Right ventricle myocardium inferior (tissue), 1 donor: ENCODE measurements at regions of chr5 and their contacts with region 1.

Region 1: DNA sequence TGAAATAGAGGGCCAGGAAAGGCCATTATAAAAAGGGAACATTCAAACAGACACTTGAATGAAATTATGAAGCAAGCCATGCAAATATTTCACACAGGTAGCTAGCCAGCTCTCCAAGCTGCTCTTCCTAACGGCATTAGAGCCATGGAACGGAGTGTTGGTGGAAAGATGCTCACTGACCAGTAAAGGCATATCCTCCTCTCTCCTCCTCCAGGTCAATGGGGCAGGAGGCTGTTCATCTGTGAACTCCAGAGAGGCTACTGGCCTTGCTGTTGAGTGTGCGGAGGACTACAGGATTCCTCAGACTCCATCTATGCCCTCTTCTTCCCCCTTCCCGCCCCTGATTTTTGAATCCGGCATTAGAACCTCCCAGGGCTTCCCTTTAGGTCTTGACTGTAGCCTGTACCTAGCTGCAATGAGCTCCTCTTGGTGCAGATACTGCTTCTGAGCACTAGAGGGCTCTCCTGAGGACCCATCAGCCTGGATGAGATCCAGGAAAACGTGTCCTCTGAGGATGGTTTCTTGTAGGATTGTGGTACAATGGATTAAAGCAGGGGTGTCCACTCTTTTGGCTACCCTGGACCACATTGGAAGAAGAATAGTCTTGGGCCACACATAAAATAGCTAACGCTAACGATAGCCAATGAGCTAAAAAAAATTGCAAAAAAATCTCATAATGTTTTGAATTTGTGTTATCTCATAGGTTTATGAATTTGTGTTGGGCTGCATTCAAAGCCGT is 162.2 kb downstream of the SREK1 start:
- DNase-seq: no peak
- ATAC-seq: peak; percentile 84

Region 2: DNA sequence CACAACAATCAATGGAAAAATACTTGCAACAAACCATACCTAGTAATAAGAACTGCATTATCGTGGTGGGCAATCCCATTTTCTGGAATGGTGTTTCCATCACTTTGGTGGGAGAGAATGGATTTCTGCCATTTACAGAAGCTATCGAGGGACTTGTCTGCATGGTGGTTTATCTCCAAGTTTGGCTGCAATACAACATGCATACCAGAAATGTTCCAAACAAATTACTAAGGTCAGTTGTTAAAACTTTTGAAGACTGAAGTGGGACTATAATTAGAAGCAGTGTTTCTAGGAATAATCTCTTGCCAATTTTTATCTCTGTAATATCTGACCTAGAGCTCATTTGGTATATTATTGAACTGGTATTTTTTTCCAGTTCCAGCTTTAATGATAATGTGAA is 854.8 kb before region 1 on chr5:
- intact Hi-C with region 1: no loop called
- DNase-seq: no peak
- ATAC-seq: no peak

Region 3: GRCh38 chr5:66498791-66499207 is 192.5 kb after region 1 on chr5:
- intact Hi-C with region 1: loop called (anchors 2 kb)
- DNase-seq: no peak
- ATAC-seq: peak; percentile 88

Region 4: DNA sequence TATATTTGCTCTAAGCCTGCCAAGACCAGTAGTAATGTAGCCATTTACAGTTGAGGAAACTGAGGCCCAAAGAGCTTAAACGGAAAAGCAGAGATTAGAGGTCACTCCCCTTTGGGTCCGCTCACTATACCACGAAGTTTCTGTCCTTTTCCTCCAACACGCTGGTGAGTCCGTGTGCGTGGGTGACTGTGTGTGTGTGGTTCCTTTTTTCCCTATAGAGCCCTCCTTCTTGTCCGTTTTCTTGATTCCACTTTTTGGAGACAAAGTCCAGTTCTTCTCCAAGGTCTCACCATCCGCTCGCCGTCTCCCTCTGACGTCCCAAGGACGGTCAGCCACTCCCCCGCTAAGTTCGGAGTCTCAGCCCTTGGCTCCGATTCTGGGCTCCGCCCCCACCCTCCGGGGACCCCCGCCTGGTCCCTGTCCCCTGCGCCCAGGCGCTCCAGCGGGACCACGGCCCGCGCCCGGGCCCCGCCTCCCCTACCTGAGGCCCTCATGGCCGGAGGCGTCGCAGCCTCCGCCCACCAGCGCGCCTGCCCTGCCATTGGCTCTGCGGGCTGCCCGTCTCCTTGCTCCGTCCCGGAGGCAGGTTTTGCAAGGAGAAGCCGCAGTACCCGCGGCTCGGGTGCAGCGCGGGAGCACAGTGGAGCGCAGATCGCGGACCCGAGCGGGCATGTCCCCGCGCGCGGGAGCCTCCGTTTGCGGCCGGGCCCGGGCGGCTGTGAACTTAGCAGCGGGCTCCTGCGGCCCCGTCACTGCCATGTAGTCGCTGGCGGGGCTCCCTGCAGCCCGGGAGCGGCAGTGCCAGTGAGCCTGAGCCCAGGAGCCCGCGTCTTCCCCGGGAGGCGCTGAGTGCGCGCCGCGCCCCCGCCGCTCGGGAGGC is 289.7 kb after region 1 on chr5 and contains the start of gene MAST4:
- intact Hi-C with region 1: loop called (anchors 2 kb)
- DNase-seq: peak; percentile 92
- ATAC-seq: peak; percentile 96
- total RNA-seq, gene MAST4: 39.6 TPM

Region 5: GRCh38 chr5:66757188-66757833 is 451.0 kb after region 1 on chr5:
- intact Hi-C with region 1: loop called (anchors 1 kb)
- DNase-seq: no peak
- ATAC-seq: peak; percentile 69